Activated B cell treated with CpG ODN at 0.5 μM for 24 hours (primary cell): ENCODE measurements at regions of chr1 and their contacts with region 1.

Region 1: GRCh38 chr1:165392634-165393571 is 36.4 kb upstream of the LMX1A start:
- DNase-seq: peak; percentile 88
- ATAC-seq: peak; percentile 99
- H3K4me3 Mint-ChIP-seq: peak overlapping the region; percentile 42
- H3K27ac Mint-ChIP-seq: peak overlapping the region; percentile 77
- H3K4me1 Mint-ChIP-seq: peaks cover 15% of the 10 kb centered on the region
- H3K27me3 Mint-ChIP-seq: peaks cover 58% of the 10 kb centered on the region
- CTCF ChIP-seq: peak; percentile 57

Region 2: GRCh38 chr1:165586435-165586834 is 193.5 kb after region 1 on chr1:
- CTCF ChIA-PET with region 1: interaction called, 96 read pairs
- POLR2A ChIA-PET with region 1: no interaction called
- intact Hi-C with region 1: no loop called
- DNase-seq: no peak
- ATAC-seq: no peak
- H3K4me3 Mint-ChIP-seq: no peak overlapping the region
- H3K27ac Mint-ChIP-seq: no peak overlapping the region
- H3K4me1 Mint-ChIP-seq: no peaks in the 10 kb centered on the region
- H3K27me3 Mint-ChIP-seq: peaks cover 32% of the 10 kb centered on the region
- CTCF ChIP-seq: no peak

Region 3: GRCh38 chr1:165630629-165631341 is 237.9 kb after region 1 on chr1 and contains the start of gene MGST3:
- CTCF ChIA-PET with region 1: interaction called, 3 read pairs
- POLR2A ChIA-PET with region 1: no interaction called
- intact Hi-C with region 1: loop called (anchors 1 kb)
- DNase-seq: peak; percentile 84
- ATAC-seq: peak; percentile 93
- H3K4me3 Mint-ChIP-seq: no peak within 1 kb of the TSS
- H3K27ac Mint-ChIP-seq: no peak within 1 kb of the TSS
- H3K4me1 Mint-ChIP-seq: peaks cover 33% of the 10 kb centered on the region
- H3K27me3 Mint-ChIP-seq: no peaks in the 10 kb centered on the region
- CTCF ChIP-seq: no peak
- total RNA-seq, gene MGST3: 31.3 and 33.4 TPM in 2 replicates

Region 4: DNA sequence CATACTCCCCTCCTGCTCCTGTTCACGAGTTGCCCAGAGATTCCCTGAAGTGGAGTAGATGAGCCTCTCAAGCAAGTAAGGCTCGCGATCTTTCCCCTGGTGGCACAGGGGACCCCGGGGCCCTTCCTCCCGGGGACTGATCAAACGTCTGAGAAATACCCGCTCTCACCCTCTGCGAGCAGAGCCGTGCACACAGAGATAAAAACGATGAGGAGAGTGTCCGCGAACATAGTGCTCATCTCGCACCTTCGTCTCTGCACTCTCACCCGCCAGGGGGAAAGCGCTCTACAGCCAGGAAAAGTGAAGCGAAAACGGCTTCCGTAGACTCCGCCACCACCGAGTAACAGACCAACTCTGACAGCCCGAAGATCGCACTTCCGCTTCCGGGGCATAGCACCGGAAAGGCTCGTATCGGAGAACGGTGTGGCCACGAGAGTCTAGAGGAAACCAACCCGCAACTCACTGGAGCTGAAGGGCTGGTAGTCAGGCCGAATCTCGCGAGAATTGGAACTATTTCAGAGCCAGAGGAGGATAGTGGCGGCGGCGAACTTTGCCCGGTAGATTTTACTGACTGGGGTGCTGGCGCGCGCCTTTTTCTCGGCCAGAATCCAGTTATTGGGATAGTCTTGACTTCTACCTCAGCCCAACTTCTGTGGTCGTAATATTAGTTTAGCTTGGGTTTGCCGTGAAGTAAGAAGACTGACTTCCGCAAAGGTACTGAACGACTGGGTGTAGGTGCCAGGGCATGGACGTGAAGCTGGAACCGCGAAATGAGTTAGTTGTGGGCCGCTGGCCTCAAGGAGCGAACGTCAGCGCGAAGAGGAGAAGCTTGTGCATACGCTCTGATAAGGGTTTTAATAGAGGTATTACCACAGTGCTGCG is 375.9 kb after region 1 on chr1 and contains the start of gene TMCO1:
- CTCF ChIA-PET with region 1: no interaction called
- POLR2A ChIA-PET with region 1: interaction called, 5 read pairs
- intact Hi-C with region 1: loop called (anchors 2 kb)
- DNase-seq: peak; percentile 84
- ATAC-seq: peak; percentile 95
- H3K4me3 Mint-ChIP-seq: peak within 1 kb of the TSS; percentile 97
- H3K27ac Mint-ChIP-seq: peak within 1 kb of the TSS; percentile 98
- H3K4me1 Mint-ChIP-seq: peaks cover 54% of the 10 kb centered on the region
- H3K27me3 Mint-ChIP-seq: no peaks in the 10 kb centered on the region
- CTCF ChIP-seq: no peak
- total RNA-seq, gene TMCO1: 43.0 and 48.3 TPM in 2 replicates

Region 5: DNA sequence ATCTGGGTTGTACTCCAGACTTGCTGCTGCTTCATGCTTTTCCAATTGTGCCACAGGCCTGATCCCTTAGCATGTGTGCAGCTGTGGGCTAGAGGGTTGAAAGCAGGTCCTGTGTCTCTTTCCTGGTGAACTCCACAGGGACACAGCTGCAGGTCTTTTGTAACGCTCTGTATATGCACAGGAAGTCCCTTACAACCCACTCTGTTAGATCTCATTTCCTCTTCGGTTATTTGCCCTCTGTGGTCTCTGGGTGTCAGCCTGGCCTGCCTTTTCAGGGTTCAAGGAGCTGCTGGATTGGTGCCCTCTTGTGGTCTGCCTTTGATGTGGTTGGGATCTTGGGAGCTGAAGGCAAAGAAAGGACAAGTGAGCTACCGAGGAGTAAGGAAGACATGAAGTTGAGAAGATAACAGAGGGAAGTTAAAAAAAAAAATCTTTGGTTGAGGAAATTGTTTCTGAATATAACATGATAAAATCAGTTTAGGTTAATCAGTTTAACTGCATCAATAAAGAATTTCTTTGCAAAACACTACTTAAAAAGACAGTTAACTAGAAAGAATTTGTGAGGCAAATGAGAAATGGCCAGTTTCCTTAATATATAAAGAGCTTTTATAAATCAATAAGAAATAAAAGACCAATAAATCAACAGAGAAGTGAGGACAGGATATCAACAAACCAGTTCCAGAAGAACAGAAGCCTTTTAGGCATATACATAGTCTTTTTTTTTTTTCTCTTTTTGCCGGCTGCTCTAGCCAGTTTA is 478.6 kb after region 1 on chr1:
- CTCF ChIA-PET with region 1: no interaction called
- POLR2A ChIA-PET with region 1: no interaction called
- intact Hi-C with region 1: loop called (anchors 1 kb)
- DNase-seq: no peak
- ATAC-seq: peak; percentile 76
- H3K4me3 Mint-ChIP-seq: peak overlapping the region; percentile 33
- H3K27ac Mint-ChIP-seq: peak overlapping the region; percentile 76
- H3K4me1 Mint-ChIP-seq: peaks cover 28% of the 10 kb centered on the region
- H3K27me3 Mint-ChIP-seq: no peaks in the 10 kb centered on the region
- CTCF ChIP-seq: no peak

Region 6: GRCh38 chr1:166170075-166170474 is 777.2 kb after region 1 on chr1:
- CTCF ChIA-PET with region 1: no interaction called
- POLR2A ChIA-PET with region 1: no interaction called
- intact Hi-C with region 1: no loop called
- DNase-seq: no peak
- ATAC-seq: no peak
- H3K4me3 Mint-ChIP-seq: no peak overlapping the region
- H3K27ac Mint-ChIP-seq: no peak overlapping the region
- H3K4me1 Mint-ChIP-seq: peaks cover 13% of the 10 kb centered on the region
- H3K27me3 Mint-ChIP-seq: peaks cover 15% of the 10 kb centered on the region
- CTCF ChIP-seq: no peak

Region 7: GRCh38 chr1:166479052-166479631 is 1086.2 kb after region 1 on chr1:
- CTCF ChIA-PET with region 1: interaction called, 6 read pairs
- POLR2A ChIA-PET with region 1: no interaction called
- intact Hi-C with region 1: loop called (anchors 1 kb)
- DNase-seq: peak; percentile 18
- ATAC-seq: no peak
- H3K4me3 Mint-ChIP-seq: no peak overlapping the region
- H3K27ac Mint-ChIP-seq: no peak overlapping the region
- H3K4me1 Mint-ChIP-seq: peaks cover 4% of the 10 kb centered on the region
- H3K27me3 Mint-ChIP-seq: no peaks in the 10 kb centered on the region
- CTCF ChIP-seq: peak; percentile 50